Mammary epithelial cell (primary cell): ENCODE measurements at regions of chr3 and their contacts with region 1.

Region 1: DNA sequence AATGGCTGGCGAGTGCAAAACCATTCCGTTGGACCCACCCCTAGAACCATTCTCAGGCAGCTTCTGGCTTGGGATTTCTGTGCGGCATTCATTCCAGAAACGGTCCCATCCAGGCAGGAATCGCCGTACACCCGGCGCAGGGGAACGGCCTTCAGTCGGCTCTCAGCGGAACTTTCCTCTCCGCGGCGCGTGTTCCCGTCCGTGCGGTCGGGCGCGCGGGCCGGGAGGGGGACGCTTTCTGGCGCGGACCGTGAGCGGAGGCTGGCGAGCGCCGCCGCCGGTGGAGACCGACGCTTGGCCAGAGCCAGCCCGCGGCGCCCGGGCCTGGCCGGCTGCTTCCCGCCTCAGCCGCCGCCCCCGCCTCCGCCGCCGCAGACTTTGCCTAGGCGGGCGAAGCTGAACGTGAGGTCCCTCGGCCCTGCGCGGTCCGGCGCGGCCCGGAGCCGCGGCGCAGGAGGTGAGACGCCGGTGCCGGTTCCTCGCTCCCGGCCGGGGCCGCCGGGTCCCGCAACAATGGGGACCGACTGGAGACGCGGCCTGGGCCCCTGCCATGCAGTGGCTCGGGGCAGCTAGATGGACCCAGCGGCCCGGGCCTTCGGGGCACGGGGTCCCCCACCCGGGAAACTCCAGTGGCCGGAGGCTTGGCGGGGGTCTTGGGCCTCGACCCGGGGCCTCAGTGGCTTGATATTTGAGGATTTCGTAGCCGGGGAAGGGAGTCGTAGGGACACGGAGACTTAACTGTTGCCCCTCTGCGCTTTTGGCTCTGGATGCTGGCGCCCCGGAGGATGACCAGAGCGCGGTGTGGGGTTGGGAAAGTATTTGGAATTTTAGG is at the start of gene RAD54L2:
- DNase-seq: peak; percentile 86
- H3K4me3 ChIP-seq: peak within 1 kb of the TSS; percentile 71 to 82 (median 80)
- H3K27ac ChIP-seq: peak within 1 kb of the TSS; percentile 82
- H3K4me1 ChIP-seq: peaks cover 11% of the 10 kb centered on the region
- H3K27me3 ChIP-seq: no peaks in the 10 kb centered on the region
- CTCF ChIP-seq: peak in 1 of 2 donors; percentile 31
- total RNA-seq, gene RAD54L2: 26.9 to 33.2 TPM

Region 2: GRCh38 chr3:51139616-51140015 is 399.1 kb before region 1 on chr3:
- CTCF ChIA-PET with region 1: no interaction called
- dilution Hi-C with region 1: no loop called
- in situ Hi-C with region 1: no loop called
- intact Hi-C with region 1: no loop called
- DNase-seq: no peak
- H3K4me3 ChIP-seq: no peak overlapping the region
- H3K27ac ChIP-seq: no peak overlapping the region
- H3K4me1 ChIP-seq: no peaks in the 10 kb centered on the region
- H3K27me3 ChIP-seq: no peaks in the 10 kb centered on the region
- CTCF ChIP-seq: no peak

Region 3: GRCh38 chr3:51471775-51472652 is 66.7 kb before region 1 on chr3:
- CTCF ChIA-PET with region 1: no interaction called
- dilution Hi-C with region 1: no loop called
- in situ Hi-C with region 1: no loop called
- intact Hi-C with region 1: no loop called
- DNase-seq: no peak
- H3K4me3 ChIP-seq: no peak overlapping the region
- H3K27ac ChIP-seq: no peak overlapping the region
- H3K4me1 ChIP-seq: no peaks in the 10 kb centered on the region
- H3K27me3 ChIP-seq: no peaks in the 10 kb centered on the region
- CTCF ChIP-seq: no peak

Region 4: DNA sequence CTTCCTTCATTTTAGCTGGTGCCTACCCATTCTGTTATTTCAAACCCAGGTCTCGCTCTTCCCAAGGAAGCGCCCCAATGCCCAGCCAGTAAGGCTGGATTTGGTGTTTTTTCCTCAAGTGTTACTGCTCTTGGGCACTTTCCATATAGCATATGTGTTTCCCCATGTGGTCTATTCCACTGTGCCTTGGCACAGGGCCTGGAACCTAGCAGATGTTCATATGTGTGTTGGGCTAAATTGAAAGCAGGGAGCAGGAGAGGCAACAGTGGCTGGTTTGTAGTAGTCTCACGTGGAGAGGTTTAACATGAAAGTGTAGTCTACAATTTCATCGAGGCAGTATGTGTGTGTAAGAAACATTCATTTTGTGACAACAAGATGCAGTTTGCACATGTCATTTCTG is 84.2 kb after region 1 on chr3:
- CTCF ChIA-PET with region 1: no interaction called
- dilution Hi-C with region 1: no loop called
- in situ Hi-C with region 1: no loop called
- intact Hi-C with region 1: loop called (anchors 5 kb)
- DNase-seq: no peak
- H3K4me3 ChIP-seq: no peak overlapping the region
- H3K27ac ChIP-seq: no peak overlapping the region
- H3K4me1 ChIP-seq: peaks cover 23% of the 10 kb centered on the region
- H3K27me3 ChIP-seq: no peaks in the 10 kb centered on the region
- CTCF ChIP-seq: no peak